A673 (cell line): ENCODE measurements at regions of chr10 and their contacts with region 1.

Region 1: DNA sequence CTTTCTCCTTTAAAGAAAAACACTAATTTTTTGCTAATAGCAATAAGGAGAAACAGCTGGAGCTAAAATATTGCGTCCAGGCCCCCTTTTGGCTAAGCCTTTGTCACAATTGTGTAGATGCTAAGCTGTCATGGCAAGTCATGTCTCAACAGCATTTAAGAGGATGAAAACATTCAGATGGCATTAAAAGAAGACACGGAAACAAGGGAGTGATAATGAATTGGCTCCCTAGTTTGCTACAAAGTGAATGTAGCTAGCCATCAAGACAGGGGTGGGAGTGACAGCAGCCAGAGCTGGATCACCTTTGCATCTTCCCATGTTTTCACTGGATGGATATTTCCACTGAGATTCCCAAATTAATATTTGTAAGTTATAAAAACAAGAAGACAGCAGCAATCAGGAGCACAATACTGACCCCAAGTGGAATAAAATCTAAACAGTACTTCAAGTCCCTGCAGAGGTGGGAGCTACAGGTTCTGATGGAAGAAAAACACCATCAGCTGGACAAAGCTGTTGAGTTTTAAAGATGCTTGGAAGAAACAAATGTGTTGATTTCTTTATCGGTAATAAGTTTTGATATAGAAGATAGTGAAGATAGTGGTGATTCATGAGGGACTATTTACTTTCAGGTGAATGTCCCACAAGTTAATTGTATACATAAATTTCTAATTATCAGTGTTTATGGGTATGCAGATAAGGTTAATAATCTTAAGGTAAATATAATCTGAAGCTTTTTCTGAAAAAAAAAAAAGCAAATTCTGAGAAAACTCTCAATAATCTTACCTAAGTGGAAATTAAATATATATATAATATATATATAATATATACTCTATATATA is 129.4 kb downstream of the SLC16A9 start:
- DNase-seq: peak; percentile 81
- H3K4me3 ChIP-seq: no peak overlapping the region
- H3K27ac ChIP-seq: no peak overlapping the region
- H3K4me1 ChIP-seq: peaks cover 15% of the 10 kb centered on the region
- H3K27me3 ChIP-seq: no peaks in the 10 kb centered on the region
- CTCF ChIP-seq: peak; percentile 72

Region 2: DNA sequence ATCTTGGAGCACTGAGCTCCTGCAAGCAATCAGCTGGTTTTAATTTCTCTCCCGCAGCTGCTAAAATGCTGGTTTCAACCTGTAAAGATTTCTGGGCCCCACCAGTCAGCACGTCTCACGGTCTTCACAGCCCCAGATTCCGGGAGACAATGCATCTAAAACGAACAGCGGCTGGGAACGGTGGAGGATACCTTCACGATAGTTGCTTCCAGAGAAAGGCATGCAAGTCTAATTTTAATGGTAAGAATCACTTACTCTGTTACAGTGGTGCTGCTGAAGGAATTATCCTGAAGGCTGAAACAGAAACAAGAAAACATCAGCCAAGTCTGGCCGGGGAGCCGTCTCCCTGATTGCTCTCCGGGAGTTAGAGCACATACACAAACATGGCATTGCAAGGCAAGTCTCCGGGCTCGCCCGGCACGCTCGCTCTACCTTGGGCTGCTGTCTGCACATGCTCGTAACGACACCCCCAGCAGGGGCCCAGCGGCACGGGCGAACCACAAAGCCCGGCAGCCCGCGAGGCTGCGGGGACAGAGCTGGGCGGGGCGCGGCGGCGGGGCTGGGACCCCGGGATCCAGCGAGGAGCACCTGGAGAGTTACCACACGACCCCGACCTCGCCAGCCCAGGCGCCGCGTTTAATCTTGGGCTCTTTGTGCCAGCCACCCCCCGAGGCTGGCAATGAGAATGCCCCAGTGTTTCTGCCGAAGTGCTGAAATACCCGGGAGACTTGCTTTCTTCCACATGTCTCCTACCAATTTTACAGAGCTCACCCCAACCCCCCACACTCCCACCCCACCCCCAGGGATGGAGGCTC is 217.9 kb before region 1 on chr10 and contains the start of gene FAM13C:
- CTCF ChIA-PET with region 1: no interaction called
- POLR2A ChIA-PET with region 1: no interaction called
- intact Hi-C with region 1: loop called (anchors 10 kb)
- DNase-seq: peak; percentile 88
- H3K4me3 ChIP-seq: peak within 1 kb of the TSS; percentile 53
- H3K27ac ChIP-seq: peak within 1 kb of the TSS; percentile 64
- H3K4me1 ChIP-seq: peaks cover 25% of the 10 kb centered on the region
- H3K27me3 ChIP-seq: no peaks in the 10 kb centered on the region
- CTCF ChIP-seq: no peak
- total RNA-seq, gene FAM13C: 18.5 and 21.2 TPM in 2 replicates

Region 3: GRCh38 chr10:59434463-59435321 is 145.6 kb before region 1 on chr10:
- CTCF ChIA-PET with region 1: interaction called, 5 read pairs
- POLR2A ChIA-PET with region 1: no interaction called
- intact Hi-C with region 1: loop called (anchors 2 kb)
- DNase-seq: peak; percentile 49
- H3K4me3 ChIP-seq: no peak overlapping the region
- H3K27ac ChIP-seq: peak overlapping the region; percentile 73
- H3K4me1 ChIP-seq: peaks cover 56% of the 10 kb centered on the region
- H3K27me3 ChIP-seq: no peaks in the 10 kb centered on the region
- CTCF ChIP-seq: no peak

Region 4: DNA sequence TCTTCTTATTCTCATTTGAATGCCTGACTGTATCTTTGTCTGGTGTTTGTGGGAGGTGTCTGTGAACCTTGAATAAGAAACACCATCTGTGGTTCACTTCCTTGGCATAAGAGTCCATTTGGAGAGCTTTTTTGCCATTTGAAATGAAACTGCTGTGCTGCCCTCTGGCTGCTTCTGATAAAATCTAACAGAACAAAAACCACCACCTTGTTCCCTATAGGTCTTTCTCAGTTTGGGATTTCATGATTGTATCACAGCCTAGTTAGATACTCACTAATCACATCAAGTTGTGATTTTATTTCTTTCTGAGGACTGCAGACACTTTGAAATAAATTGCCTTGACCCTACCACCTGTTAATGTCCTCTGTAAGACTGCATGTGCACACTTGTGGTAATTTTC is 115.2 kb before region 1 on chr10:
- CTCF ChIA-PET with region 1: no interaction called
- POLR2A ChIA-PET with region 1: no interaction called
- intact Hi-C with region 1: loop called (anchors 5 kb)
- DNase-seq: peak; percentile 62
- H3K4me3 ChIP-seq: no peak overlapping the region
- H3K27ac ChIP-seq: no peak overlapping the region
- H3K4me1 ChIP-seq: peaks cover 25% of the 10 kb centered on the region
- H3K27me3 ChIP-seq: no peaks in the 10 kb centered on the region
- CTCF ChIP-seq: peak; percentile 51

Region 5: GRCh38 chr10:59735296-59735695 is 155.1 kb after region 1 on chr10:
- CTCF ChIA-PET with region 1: no interaction called
- POLR2A ChIA-PET with region 1: no interaction called
- intact Hi-C with region 1: no loop called
- DNase-seq: no peak
- H3K4me3 ChIP-seq: no peak overlapping the region
- H3K27ac ChIP-seq: no peak overlapping the region
- H3K4me1 ChIP-seq: no peaks in the 10 kb centered on the region
- H3K27me3 ChIP-seq: no peaks in the 10 kb centered on the region
- CTCF ChIP-seq: no peak